Left colon (tissue), 2 donors: ENCODE measurements at regions of chr3 and their contacts with region 1.

Region 1: DNA sequence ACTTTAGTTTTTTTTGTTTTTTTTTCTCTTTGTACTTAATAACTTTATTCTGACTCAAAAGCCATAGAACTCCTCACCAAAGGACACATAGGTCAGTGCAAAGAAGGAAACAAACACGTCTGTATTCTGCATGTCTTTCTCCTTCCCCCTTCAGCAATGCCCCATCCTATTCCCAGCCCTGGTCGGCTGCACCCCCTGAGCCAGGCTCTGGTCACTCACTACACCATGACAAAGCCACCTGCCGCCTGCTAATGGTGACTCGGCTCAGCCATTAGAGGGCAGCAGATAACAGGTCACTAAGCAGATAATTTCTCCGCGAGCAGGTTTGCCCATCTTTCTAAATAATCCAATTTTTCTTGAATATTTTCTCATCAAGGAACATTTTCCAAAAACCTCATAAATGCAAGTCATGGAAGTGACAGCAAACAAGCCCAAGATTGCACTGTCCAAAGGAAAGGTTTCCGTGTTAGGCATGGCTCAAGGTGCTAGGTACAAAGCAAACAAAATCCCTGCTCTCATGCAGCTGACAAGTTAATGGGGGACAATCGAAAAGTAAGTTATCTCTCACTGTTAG is 37.8 kb downstream of the TM4SF4 start:
- DNase-seq: peak; percentile 41 to 58
- ATAC-seq: peak; percentile 81

Region 2: DNA sequence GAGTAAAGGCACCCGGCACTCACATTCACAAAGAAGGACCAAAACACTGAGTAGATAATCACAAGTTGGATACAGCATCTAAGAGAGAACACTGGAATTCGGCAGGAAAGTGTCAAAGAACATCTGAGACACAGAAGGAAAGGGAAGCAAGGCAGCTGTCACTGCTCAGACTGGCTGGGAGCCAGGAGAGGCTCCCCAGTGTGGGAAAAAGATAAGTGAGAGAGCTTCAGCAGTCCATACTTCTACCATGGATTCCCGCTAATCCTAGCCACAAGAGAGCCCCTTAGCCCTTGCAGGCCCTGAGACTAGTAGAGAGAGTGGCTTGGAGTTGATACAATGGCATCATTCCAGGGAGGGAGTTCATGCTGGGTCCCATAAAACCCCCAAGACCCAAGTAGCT is 254.0 kb before region 1 on chr3:
- intact Hi-C with region 1: no loop called
- DNase-seq: no peak
- ATAC-seq: no peak

Region 3: DNA sequence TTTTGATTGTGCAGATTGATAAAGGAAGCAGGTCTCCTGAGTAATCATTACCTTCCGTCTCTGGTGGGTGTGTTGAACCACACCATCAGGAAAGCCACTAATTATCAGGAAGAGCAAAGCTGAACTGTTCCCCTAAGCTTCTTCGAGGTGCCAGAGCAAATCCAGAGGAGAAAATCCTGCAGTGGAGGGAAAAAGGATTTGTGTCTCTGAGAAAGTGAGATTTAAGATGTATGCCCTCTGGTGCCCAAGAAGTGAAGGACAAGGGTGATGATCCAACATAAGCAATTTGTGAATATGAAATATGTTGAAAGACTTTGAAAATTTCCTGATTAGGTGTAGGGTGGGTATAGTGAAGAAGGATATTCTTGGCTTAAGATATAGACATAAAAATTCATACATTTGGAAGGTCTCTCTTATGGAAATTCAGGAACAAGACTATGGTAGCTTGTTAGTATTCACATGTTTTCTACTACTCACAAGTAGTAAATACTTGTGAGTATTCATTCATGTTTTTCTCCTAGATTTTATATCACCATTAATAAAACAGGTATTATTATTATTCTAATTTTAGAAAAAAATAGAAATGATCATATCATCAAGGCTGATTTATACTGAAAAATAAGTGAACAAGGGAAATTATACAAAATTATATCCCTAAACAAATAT is 205.2 kb after region 1 on chr3:
- intact Hi-C with region 1: loop called in 1 of 2 experiments (anchors 5 kb)
- DNase-seq: peak in 1 of 2 donors; percentile 34
- ATAC-seq: peak; percentile 61